Stomach (tissue), 19 donors: ENCODE measurements at regions of chr6 and their contacts with region 1.

Region 1: DNA sequence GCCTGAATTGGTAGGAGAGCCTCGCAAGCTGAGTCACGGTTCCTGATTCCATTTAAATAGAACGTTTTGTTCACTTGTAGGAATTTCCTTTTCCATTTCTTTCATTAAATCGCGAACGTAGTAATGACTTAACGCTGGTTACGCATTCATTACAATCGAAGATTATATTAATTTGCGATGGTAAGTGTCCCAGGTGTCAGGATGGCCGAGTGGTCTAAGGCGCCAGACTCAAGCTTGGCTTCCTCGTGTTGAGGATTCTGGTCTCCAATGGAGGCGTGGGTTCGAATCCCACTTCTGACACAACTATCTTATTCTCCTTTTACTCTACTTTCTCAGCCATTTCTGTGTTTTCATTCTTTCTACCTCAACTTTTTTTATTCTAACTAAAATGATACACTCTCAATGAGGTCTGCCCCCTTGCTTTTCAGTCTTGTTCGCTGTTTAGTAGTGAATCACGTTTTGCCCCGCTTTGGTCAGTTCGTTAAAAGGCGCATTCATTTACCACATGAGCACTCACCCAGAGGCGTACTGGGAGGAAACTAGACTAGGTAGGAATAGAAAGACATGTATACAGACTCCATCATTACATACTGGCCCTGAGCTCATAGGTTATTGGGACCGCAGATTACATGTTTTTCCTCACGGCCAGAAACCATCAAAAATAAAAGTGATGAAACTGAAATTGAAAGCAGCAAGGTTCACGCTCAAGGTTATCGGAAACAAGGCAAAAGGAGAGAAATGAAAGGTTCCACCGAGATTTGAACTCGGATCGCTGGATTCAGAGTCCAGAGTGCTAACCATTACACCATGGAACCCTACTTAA is 17.3 kb upstream of the TRIM27 start:
- DNase-seq: peak; percentile 57 to 92
- H3K4me3 ChIP-seq: peak overlapping the region; percentile 50 to 60 (median 53)
- H3K27ac ChIP-seq: peak overlapping the region; percentile 74 to 92 (median 81)
- H3K4me1 ChIP-seq: peaks cover 4 to 44% (median 33%) of the 10 kb centered on the region in 4 donors
- H3K27me3 ChIP-seq: no peaks in the 10 kb centered on the region
- CTCF ChIP-seq: no peak
- EP300 ChIP-seq: no peak
- POLR2A ChIP-seq: no peak

Region 2: GRCh38 chr6:28981833-28982475 is 40.9 kb after region 1 on chr6:
- intact Hi-C with region 1: loop called (anchors 5 kb)
- DNase-seq: peak; percentile 73 to 96
- H3K4me3 ChIP-seq: peak overlapping the region; percentile 60 to 74 (median 66)
- H3K27ac ChIP-seq: peak overlapping the region; percentile 63 to 86 (median 79)
- H3K4me1 ChIP-seq: peaks cover 0 to 50% (median 16%) of the 10 kb centered on the region in 4 donors
- H3K27me3 ChIP-seq: peaks cover 0 to 15% (median 4%) of the 10 kb centered on the region in 3 donors
- CTCF ChIP-seq: peak in 2 of 7 experiments; percentile 12 to 16
- EP300 ChIP-seq: no peak
- POLR2A ChIP-seq: no peak

Region 3: DNA sequence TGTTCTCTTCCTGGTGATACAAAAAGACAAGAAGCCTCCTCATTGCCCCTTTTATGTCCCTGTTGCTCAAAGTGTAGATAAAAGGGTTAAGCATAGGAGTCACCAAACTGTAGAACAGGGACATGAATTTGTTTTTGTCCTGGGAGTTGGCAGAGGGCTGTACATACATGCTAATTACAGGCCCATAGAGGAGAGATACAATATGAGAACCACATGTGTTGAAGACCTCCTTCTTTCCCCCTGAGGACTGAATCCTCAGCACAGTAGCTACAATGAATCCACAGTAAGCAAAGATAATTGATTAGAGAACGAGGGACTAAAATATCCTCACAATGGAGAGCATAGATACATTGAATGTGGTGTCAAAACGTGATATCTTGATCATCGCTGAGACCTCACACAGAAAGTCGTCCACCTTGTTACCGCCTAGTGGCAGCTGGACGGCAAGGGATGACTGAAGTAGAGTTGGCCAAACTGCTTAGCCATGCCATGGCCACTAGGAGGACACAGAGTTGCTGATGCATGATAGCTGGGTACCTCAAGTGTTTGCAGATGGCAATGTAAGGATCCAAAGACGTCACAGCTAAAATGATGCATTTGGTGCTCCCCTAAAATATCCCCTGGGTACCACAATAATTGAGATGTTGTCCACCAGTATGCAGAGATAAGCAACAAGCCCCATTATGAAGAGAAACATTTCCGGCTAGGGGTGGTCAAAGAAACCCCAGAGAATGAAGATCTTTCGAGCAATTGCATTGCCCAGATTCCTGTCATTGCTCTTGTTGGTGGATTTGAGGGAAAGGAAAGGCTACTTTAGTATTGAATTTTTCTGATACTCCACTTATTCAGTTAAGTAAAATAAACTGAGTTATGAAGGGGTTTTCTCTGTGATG is 131.0 kb after region 1 on chr6:
- intact Hi-C with region 1: no loop called
- DNase-seq: peak in 1 of 2 donors; percentile 12
- H3K4me3 ChIP-seq: no peak overlapping the region
- H3K27ac ChIP-seq: no peak overlapping the region
- H3K4me1 ChIP-seq: no peaks in the 10 kb centered on the region
- H3K27me3 ChIP-seq: no peaks in the 10 kb centered on the region
- CTCF ChIP-seq: peak in 2 of 7 experiments; percentile 21 to 24
- EP300 ChIP-seq: no peak
- POLR2A ChIP-seq: no peak